GM12878 (cell line): ENCODE measurements at regions of chr6 and their contacts with region 1.

Region 1: GRCh38 chr6:30102970-30103874 is 9.7 kb downstream of the TRIM31 start:
- DNase-seq: peak; percentile 24
- ATAC-seq: peak; percentile 88
- H3K4me3 ChIP-seq: peak overlapping the region; percentile 53; the same call in 1 of the 2 replicates
- H3K27ac ChIP-seq: no peak overlapping the region
- H3K4me1 ChIP-seq: peaks cover 19% of the 10 kb centered on the region
- H3K27me3 ChIP-seq: peaks cover 12 to 27% of the 10 kb centered on the region in 2 experiments
- CTCF ChIP-seq: peak; percentile 95 to 97 (median 96)
- EP300 ChIP-seq: no peak
- POLR2A ChIP-seq: no peak
- RAD21 ChIP-seq: peak; percentile 96

Region 2: GRCh38 chr6:29964887-29965562 is 138.2 kb before region 1 on chr6:
- CTCF ChIA-PET with region 1: interaction called, 11 read pairs
- POLR2A ChIA-PET with region 1: interaction called, 5 read pairs
- RAD21 ChIA-PET with region 1: interaction called, 4 read pairs
- SMC1A ChIA-PET with region 1: interaction called, 4 read pairs
- in situ Hi-C with region 1: no loop called
- intact Hi-C with region 1: no loop called
- DNase-seq: peak; percentile 89
- ATAC-seq: peak; percentile 93
- H3K4me3 ChIP-seq: peak overlapping the region; percentile 66
- H3K27ac ChIP-seq: peak overlapping the region; percentile 93
- H3K4me1 ChIP-seq: peaks cover 5% of the 10 kb centered on the region; the same call in 1 of the 2 replicates
- H3K27me3 ChIP-seq: no peaks in the 10 kb centered on the region
- CTCF ChIP-seq: no peak
- EP300 ChIP-seq: peak; percentile 69 to 78
- POLR2A ChIP-seq: peak; percentile 64
- RAD21 ChIP-seq: no peak

Region 3: GRCh38 chr6:30087876-30088275 is 15.3 kb before region 1 on chr6:
- CTCF ChIA-PET with region 1: interaction called, 7 read pairs
- POLR2A ChIA-PET with region 1: no interaction called
- RAD21 ChIA-PET with region 1: interaction called, 10 read pairs
- SMC1A ChIA-PET with region 1: no interaction called
- in situ Hi-C with region 1: no loop called
- intact Hi-C with region 1: no loop called
- DNase-seq: no peak
- ATAC-seq: no peak
- H3K4me3 ChIP-seq: no peak overlapping the region
- H3K27ac ChIP-seq: no peak overlapping the region
- H3K4me1 ChIP-seq: no peaks in the 10 kb centered on the region
- H3K27me3 ChIP-seq: peaks cover 0 to 3% of the 10 kb centered on the region in 2 experiments; a peak in 2 of 4 replicates
- CTCF ChIP-seq: no peak
- EP300 ChIP-seq: no peak
- POLR2A ChIP-seq: no peak
- RAD21 ChIP-seq: no peak

Region 4: GRCh38 chr6:30130887-30131862 is 28.0 kb after region 1 on chr6:
- CTCF ChIA-PET with region 1: interaction called, 561 read pairs
- POLR2A ChIA-PET with region 1: interaction called, 54 read pairs
- RAD21 ChIA-PET with region 1: interaction called, 333 read pairs
- SMC1A ChIA-PET with region 1: interaction called, 647 read pairs
- in situ Hi-C with region 1: no loop called
- intact Hi-C with region 1: loop called (anchors 1 kb)
- DNase-seq: peak; percentile 32
- ATAC-seq: peak; percentile 97
- H3K4me3 ChIP-seq: no peak overlapping the region
- H3K27ac ChIP-seq: no peak overlapping the region
- H3K4me1 ChIP-seq: peaks cover 5% of the 10 kb centered on the region
- H3K27me3 ChIP-seq: peaks cover 4 to 10% of the 10 kb centered on the region in 2 experiments
- CTCF ChIP-seq: peak; percentile 98 to 100 (median 100); a peak in 5 of 6 replicates
- EP300 ChIP-seq: no peak
- POLR2A ChIP-seq: no peak
- RAD21 ChIP-seq: peak; percentile 81

Region 5: DNA sequence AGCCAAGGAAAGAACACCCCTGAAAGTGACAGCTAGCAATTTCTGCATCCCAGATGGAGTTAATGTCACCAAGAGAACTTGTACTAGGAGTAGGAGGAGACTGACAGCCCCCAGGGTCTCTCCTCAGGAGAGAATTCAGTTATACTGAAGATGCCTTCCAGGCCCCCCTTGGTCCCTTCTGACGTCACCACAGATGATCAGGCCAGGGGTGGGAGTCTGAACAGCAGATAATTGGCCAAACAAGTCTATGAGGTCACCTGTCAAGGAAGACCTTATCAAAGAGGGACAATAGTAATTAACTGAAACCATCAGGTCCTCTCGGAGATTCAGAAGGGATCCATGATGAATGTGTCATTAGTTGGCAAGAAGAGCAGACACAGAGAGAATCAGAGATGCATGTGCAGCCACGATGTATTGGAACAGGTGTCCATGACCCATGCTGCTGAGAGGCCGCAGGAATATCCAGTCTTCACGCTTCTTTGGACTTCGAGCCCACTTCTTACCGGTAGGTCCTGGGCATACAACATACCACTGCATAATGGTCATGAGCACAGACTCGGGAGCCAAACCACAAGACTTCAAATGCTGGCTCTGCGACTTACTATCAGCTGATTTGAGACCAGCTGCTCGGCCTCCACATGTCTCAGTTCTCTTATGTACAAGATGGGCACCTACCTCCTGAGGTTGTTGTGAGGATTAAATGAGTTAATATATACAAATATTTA is 47.6 kb after region 1 on chr6:
- CTCF ChIA-PET with region 1: interaction called, 28 read pairs
- POLR2A ChIA-PET with region 1: no interaction called
- RAD21 ChIA-PET with region 1: interaction called, 8 read pairs
- SMC1A ChIA-PET with region 1: interaction called, 4 read pairs
- in situ Hi-C with region 1: no loop called
- intact Hi-C with region 1: no loop called
- DNase-seq: no peak
- ATAC-seq: no peak
- H3K4me3 ChIP-seq: no peak overlapping the region
- H3K27ac ChIP-seq: no peak overlapping the region
- H3K4me1 ChIP-seq: no peaks in the 10 kb centered on the region; the same call in 1 of the 2 replicates
- H3K27me3 ChIP-seq: peaks cover 0 to 1% of the 10 kb centered on the region in 2 experiments; a peak in 2 of 4 replicates
- CTCF ChIP-seq: no peak
- EP300 ChIP-seq: no peak
- POLR2A ChIP-seq: no peak
- RAD21 ChIP-seq: no peak

Region 6: GRCh38 chr6:30480536-30481156 is 377.4 kb after region 1 on chr6:
- CTCF ChIA-PET with region 1: no interaction called
- POLR2A ChIA-PET with region 1: no interaction called
- RAD21 ChIA-PET with region 1: no interaction called
- SMC1A ChIA-PET with region 1: no interaction called
- in situ Hi-C with region 1: no loop called
- intact Hi-C with region 1: no loop called
- DNase-seq: no peak
- ATAC-seq: peak; percentile 68
- H3K4me3 ChIP-seq: no peak overlapping the region
- H3K27ac ChIP-seq: no peak overlapping the region
- H3K4me1 ChIP-seq: peaks cover 9% of the 10 kb centered on the region; the same call in 1 of the 2 replicates
- H3K27me3 ChIP-seq: peaks cover 2 to 8% of the 10 kb centered on the region in 2 experiments; a peak in 3 of 4 replicates
- CTCF ChIP-seq: no peak
- EP300 ChIP-seq: no peak
- POLR2A ChIP-seq: no peak
- RAD21 ChIP-seq: no peak